ENCODE measurements at regions of chr7 and their contacts with region 1.

Region 1: GRCh38 chr7:123661765-123662164 is 6.1 kb downstream of the LMOD2 start:
- DNase-seq: no peak
- ATAC-seq: no peak
- H3K4me3 ChIP-seq: peak overlapping the region in 3 of 4 donors; percentile 37 to 73 (median 70)
- H3K27ac ChIP-seq: peak overlapping the region; percentile 88 to 96 (median 96)
- H3K4me1 ChIP-seq: peaks cover 75 to 76% of the 10 kb centered on the region in 2 donors
- H3K27me3 ChIP-seq: no peaks in the 10 kb centered on the region
- CTCF ChIP-seq: no peak
- POLR2A ChIP-seq: no peak

Region 2: DNA sequence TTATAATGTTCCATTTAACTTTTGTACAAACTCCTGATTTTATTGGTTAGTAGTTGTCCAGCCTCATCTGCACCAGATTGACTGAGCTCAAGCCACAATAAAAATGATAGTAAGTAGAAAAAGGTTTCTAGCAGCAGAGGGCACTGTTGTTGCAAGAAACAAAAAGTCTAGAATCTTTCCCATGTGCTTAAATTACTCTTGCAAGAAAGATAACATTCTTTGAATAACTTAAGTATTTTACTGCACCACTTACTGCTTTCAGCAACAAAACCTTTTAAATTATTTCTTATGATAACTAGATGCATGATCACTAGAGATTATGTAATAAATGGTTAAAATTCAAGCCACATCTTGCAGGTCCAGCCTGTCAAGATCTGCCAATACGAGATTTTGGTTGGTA is 20.9 kb after region 1 on chr7:
- in situ Hi-C with region 1: no loop called
- intact Hi-C with region 1: loop called (anchors 2 kb)
- DNase-seq: no peak
- ATAC-seq: no peak
- H3K4me3 ChIP-seq: no peak overlapping the region
- H3K27ac ChIP-seq: peak overlapping the region in 3 of 4 donors; percentile 75 to 85 (median 82)
- H3K4me1 ChIP-seq: peaks cover 47% of the 10 kb centered on the region in 2 donors
- H3K27me3 ChIP-seq: no peaks in the 10 kb centered on the region
- CTCF ChIP-seq: peak; percentile 35 to 59 (median 45)
- POLR2A ChIP-seq: no peak

Measured in gastrocnemius medialis (tissue), 4 donors.